Endothelial cell of umbilical vein (primary cell): ENCODE measurements at regions of chr4 and their contacts with region 1.

Region 1: GRCh38 chr4:99986792-99987191 is 36.7 kb upstream of the H2AZ1 start:
- DNase-seq: no peak
- H3K4me3 ChIP-seq: no peak overlapping the region
- H3K27ac ChIP-seq: no peak overlapping the region
- H3K4me1 ChIP-seq: no peaks in the 10 kb centered on the region
- H3K27me3 ChIP-seq: no peaks in the 10 kb centered on the region
- CTCF ChIP-seq: no peak
- POLR2A ChIP-seq: no peak

Region 2: DNA sequence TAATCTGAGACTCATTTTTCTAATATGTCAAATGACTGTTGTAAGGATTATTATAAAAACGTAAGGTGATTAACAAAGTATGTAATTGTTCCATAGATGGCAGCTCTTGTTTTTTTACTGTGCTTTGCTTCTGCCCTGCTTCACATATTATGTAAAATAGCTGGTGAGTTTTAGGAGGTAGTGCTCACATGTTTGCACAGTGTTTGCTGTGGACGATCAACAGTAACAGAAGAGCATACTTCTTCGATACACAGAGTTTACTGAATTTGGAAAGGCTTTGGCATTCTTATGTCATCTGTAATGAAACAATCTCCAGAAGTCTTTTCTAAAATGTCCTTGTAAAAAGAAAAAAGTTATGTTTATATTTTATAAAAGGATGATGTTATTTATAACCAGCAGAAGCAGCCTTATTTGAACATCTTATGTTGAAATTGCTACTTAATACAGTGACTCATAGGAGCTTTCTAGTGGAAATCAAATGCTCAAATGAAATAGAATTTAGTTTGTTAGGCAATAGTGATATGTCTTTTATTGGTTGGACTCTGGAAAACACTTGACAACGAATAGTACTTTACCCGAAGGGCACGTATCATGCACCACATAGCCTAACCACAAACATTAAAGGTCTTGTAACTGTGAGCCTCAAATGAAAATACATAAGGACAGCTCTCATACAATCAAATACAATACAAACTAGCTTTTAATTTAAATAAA is 414.1 kb before region 1 on chr4:
- CTCF ChIA-PET with region 1: no interaction called
- POLR2A ChIA-PET with region 1: no interaction called
- dilution Hi-C with region 1: no loop called
- intact Hi-C with region 1: no loop called
- DNase-seq: no peak
- H3K4me3 ChIP-seq: no peak overlapping the region
- H3K27ac ChIP-seq: no peak overlapping the region
- H3K4me1 ChIP-seq: no peaks in the 10 kb centered on the region
- H3K27me3 ChIP-seq: peaks cover 4 to 33% of the 10 kb centered on the region in 2 experiments
- CTCF ChIP-seq: no peak
- POLR2A ChIP-seq: no peak

Region 3: DNA sequence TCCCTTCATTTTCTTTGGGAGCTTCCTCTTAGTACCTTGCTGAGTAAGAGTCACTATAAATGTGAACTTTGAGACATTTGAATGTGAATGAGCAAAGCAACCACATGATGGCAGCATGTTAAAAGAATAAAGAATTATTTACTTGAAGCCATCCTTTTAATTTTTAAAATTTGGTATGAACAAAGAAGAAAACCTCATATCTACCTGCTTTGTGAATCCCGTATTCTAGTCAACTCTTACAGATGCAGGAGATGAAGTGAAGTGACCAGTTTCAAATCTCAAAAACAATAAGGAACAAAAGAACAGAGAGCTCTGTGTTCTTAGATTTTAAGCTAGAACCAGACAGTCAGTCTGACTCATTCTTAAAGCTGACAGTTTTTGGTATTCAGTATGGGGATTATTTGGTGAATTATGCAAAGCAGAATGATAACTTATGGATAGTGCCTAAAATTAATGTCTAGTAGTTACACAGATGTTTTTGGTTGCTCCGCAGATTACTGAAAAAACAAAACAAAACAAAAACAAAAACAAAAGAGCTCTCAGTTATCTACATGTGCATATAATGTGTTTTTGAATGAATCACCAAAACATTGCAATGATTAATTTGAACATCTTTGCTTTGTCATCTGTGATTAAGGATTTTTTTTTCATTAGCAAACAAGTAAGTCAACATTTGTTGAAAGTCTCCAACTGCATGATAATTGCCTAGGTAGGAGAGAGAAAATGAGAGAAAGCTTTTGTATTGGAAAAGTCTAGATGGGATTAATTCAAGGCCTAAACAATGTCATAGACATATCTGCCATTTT is 11.5 kb after region 1 on chr4:
- CTCF ChIA-PET with region 1: interaction called, 10 read pairs
- POLR2A ChIA-PET with region 1: no interaction called
- dilution Hi-C with region 1: no loop called
- intact Hi-C with region 1: no loop called
- DNase-seq: peak; percentile 42
- H3K4me3 ChIP-seq: no peak overlapping the region
- H3K27ac ChIP-seq: no peak overlapping the region
- H3K4me1 ChIP-seq: no peaks in the 10 kb centered on the region
- H3K27me3 ChIP-seq: no peaks in the 10 kb centered on the region
- CTCF ChIP-seq: no peak
- POLR2A ChIP-seq: no peak

Region 4: DNA sequence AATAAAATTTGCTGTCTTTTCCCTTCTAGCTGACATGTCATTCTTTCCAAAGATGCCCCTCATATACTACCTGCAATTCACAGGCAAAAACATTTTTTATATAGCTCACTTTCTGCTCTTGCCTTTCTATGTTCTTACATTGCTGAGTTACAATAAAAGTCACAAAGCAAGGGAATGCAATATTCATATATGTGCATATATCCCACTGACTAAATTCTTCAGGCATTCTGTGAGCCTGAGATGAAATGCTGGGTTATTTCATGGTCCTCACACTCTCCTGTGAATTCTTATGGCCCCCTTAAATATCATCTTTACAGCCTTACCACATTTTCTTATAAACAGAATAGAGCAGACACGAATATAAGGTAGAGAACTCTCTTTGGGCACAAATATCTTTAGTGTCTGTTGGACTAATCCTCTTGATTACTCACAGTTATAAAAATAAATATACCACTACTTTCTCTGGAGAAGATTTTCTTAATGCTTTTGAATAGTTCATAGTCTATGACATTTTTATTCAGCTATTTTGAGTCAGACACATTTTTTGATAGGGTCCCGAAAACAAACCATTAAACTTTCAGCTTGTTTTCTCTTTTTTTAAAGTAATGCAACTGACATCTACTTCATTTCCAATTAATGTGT is 47.4 kb after region 1 on chr4:
- CTCF ChIA-PET with region 1: no interaction called
- POLR2A ChIA-PET with region 1: no interaction called
- dilution Hi-C with region 1: no loop called
- intact Hi-C with region 1: no loop called
- DNase-seq: no peak
- H3K4me3 ChIP-seq: no peak overlapping the region
- H3K27ac ChIP-seq: no peak overlapping the region
- H3K4me1 ChIP-seq: no peaks in the 10 kb centered on the region
- H3K27me3 ChIP-seq: no peaks in the 10 kb centered on the region
- CTCF ChIP-seq: no peak
- POLR2A ChIP-seq: no peak